Posterior vena cava (tissue), 2 donors: ENCODE measurements at regions of chr7 and their contacts with region 1.

Region 1: GRCh38 chr7:75756991-75757676 is 14.9 kb downstream of the CCL26 start:
- DNase-seq: no peak

Region 2: DNA sequence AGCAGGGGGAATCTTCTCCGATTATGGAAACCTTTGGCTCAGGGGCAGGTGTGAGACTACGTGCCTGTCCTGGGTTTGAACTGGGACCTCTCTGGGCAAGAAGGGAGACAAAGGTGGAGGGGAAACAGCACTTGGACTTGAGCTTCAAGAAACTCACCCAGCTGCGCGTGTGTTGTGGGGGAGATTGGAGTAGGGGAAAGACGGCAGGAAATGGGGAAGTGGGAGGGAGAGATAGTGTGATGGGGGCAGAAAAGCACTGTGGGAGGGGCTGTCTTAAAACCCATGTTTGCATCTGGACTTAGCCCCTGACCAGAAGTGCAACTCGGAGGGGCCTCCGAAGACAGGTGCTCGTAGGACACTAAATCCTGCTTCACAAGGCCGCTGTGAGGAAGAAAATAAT is 125.4 kb before region 1 on chr7:
- intact Hi-C with region 1: loop called in 1 of 2 experiments (anchors 5 kb)
- DNase-seq: no peak